SK-N-SH (cell line): ENCODE measurements at regions of chr11 and their contacts with region 1.

Region 1: GRCh38 chr11:132114185-132114584 is 743.8 kb downstream of the NTM start:
- DNase-seq: peak; percentile 60
- H3K4me3 ChIP-seq: no peak overlapping the region
- H3K27ac ChIP-seq: no peak overlapping the region
- H3K4me1 ChIP-seq: peaks cover 0 to 22% of the 10 kb centered on the region in 2 experiments; a peak in 1 of 4 replicates
- H3K27me3 ChIP-seq: no peaks in the 10 kb centered on the region
- CTCF ChIP-seq: peak; percentile 53
- EP300 ChIP-seq: no peak
- RAD21 ChIP-seq: peak; percentile 70

Region 2: GRCh38 chr11:132103021-132103420 is 11.2 kb before region 1 on chr11:
- CTCF ChIA-PET with region 1: interaction called, 11 read pairs
- POLR2A ChIA-PET with region 1: no interaction called
- DNase-seq: no peak
- H3K4me3 ChIP-seq: no peak overlapping the region
- H3K27ac ChIP-seq: no peak overlapping the region
- H3K4me1 ChIP-seq: peaks cover 0 to 13% of the 10 kb centered on the region in 2 experiments; a peak in 1 of 4 replicates
- H3K27me3 ChIP-seq: no peaks in the 10 kb centered on the region
- CTCF ChIP-seq: no peak
- EP300 ChIP-seq: no peak
- RAD21 ChIP-seq: no peak

Region 3: DNA sequence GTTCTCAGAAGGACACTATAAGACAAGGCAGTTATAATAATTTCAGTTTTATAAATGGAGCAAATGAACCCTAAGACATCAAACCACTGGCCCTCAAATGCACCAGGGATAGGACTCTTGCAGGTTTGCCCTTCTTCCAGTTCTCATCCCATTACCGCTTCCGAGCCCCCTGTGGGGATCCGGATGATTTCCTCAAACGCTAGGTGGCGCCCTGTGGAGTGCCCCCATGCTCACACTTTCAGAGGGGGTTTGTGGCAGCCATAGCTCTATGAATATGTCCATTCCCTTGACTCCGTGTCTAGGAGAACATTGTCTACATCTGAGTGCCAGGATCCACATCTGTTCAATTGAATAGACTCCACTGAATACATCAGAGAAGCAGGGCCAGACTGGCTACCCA is 72.5 kb after region 1 on chr11:
- CTCF ChIA-PET with region 1: no interaction called
- POLR2A ChIA-PET with region 1: no interaction called
- DNase-seq: peak; percentile 11
- H3K4me3 ChIP-seq: no peak overlapping the region
- H3K27ac ChIP-seq: no peak overlapping the region
- H3K4me1 ChIP-seq: no peaks in the 10 kb centered on the region; a peak in 1 of 4 replicates
- H3K27me3 ChIP-seq: no peaks in the 10 kb centered on the region
- CTCF ChIP-seq: peak; percentile 33; the same call in 1 of the 2 replicates
- EP300 ChIP-seq: no peak
- RAD21 ChIP-seq: no peak

Region 4: DNA sequence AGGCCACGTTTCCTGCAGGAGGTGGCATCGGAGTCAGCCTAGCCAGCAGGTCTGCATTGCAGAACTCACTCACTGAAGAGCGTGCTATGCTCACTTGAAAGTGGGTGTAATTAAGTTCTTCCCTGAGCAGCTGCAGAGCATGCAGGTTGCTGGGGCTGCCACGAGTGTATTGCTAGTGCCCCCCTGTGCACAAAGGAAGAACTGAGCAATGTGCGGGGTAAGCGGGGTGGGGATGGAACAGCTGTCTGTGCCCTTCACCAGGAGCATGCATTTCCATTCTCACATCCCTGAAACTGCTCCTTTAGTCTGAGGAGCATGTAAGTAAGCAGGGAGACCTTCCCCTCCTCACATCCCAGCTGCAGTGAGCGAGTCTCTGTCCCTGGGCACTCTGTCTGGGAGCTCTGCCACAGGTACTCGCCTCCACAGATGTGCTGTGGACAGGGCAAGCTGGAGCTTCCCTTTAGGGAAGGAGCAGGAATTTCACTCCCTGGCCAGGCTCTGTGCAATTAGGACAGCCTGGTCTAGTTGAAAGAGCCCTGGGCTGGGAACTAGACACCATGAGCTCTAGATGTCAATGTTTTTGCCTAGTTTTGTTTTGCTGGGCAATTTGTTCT is 288.0 kb after region 1 on chr11:
- CTCF ChIA-PET with region 1: interaction called, 13 read pairs
- POLR2A ChIA-PET with region 1: interaction called, 3 read pairs
- DNase-seq: peak; percentile 69
- H3K4me3 ChIP-seq: no peak overlapping the region
- H3K27ac ChIP-seq: no peak overlapping the region
- H3K4me1 ChIP-seq: no peaks in the 10 kb centered on the region; a peak in 1 of 4 replicates
- H3K27me3 ChIP-seq: no peaks in the 10 kb centered on the region
- CTCF ChIP-seq: peak; percentile 52
- EP300 ChIP-seq: no peak
- RAD21 ChIP-seq: peak; percentile 79